ENCODE measurements at regions of chr13 and their contacts with region 1.

Region 1: GRCh38 chr13:110306960-110307746 is at the starts of genes COL4A1 and COL4A2:
- DNase-seq: peak; percentile 87 to 90 (median 88)
- ATAC-seq: peak; percentile 39 to 89 (median 76)
- H3K4me3 ChIP-seq: peak within 1 kb of the TSS; percentile 67 to 99 (median 87)
- H3K27ac ChIP-seq: peak within 1 kb of the TSS; percentile 92 to 99 (median 97)
- H3K4me1 ChIP-seq: peaks cover 17 to 75% (median 64%) of the 10 kb centered on the region in 12 donors
- H3K27me3 ChIP-seq: peaks cover 0 to 41% (median 0%) of the 10 kb centered on the region in 9 donors
- CTCF ChIP-seq: peak in 2 of 12 donors; percentile 8 to 12
- POLR2A ChIP-seq: peak; percentile 77 to 98
- total RNA-seq, gene COL4A1: 91.9 to 428 (median 184) TPM
- total RNA-seq, gene COL4A2: 94.0 to 377 (median 166) TPM

Region 2: DNA sequence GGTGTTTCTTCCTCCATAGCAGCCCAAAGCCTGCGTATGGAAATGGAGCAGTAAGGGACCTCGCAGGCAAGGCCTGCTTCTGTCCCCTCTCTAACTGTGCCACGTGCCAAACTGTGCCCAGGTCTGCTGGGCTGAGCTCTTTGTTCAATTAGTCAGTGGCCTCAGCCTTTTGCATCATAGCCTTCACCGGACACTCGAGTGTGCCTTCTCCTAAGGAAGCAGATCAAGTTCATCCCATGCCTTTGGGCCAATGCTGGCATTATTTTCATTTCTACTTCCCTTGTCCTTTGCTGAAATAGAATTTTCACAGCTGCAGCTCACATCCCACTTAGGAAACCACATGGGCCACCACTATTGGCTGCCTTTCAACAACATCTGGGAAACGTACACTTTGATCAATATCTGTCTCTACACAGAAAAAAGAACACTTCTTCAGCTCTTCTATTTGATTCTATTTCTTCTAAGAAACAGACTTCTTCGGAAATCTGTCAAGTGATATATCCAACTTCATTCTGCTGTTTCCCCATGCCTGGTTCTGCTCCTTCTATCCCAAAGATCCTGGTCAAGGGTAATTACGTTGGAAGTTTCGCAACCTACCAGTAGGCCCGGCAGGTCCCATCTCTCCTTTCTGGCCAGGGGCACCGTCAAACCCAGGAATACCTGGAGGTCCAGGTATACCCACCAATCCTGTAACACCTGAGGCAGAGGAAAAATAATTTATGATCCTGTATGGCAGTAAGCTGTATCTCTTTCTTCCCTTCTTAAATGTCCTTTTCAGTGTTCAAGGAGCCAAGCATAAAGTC is 144.1 kb before region 1 on chr13:
- intact Hi-C with region 1: no loop called
- DNase-seq: no peak
- ATAC-seq: peak in 1 of 4 donors; percentile 18
- H3K4me3 ChIP-seq: no peak overlapping the region
- H3K27ac ChIP-seq: peak overlapping the region in 2 of 12 donors; percentile 25 to 70
- H3K4me1 ChIP-seq: peaks cover 0 to 39% (median 5%) of the 10 kb centered on the region in 12 donors
- H3K27me3 ChIP-seq: no peaks in the 10 kb centered on the region
- CTCF ChIP-seq: no peak
- POLR2A ChIP-seq: no peak

Region 3: DNA sequence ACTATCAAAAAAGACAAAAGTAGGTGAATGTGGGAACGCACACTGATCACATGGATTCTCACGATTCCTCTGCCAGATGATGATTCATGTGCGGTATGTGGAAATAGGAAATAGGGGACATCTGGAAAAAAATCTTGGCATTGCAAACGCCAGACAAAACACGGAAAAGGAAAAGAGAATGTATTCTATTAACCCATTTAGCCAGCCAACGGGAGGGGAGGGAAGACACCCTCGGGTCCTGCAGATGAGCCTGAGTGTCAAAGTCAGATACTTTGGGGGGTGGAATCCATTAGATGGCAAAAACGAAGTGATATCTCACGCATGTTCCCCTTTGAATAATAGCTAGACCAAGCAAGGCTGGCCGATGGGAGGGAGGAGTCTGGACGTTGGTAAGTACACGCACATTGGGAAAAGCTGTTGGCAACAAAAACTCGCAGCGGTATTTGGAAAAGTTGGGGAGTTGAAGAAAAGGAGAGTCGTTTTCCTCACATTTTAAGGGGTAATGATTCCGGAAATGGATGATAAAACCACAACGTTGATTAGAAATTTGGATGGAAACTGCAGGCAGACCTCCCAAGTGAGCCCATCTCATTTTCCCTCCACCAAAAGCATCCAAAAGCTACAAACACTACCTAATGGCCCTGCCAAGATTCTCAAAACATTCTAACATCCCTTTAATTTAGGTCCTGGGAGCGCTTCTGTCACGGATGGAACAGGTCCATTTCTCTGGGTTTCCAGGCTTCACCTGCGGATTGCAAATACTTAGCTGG is 73.8 kb before region 1 on chr13:
- intact Hi-C with region 1: loop called in 9 of 10 experiments (anchors 5 kb)
- DNase-seq: peak in 3 of 5 donors; percentile 61 to 68 (median 66)
- ATAC-seq: peak; percentile 16 to 59 (median 47)
- H3K4me3 ChIP-seq: peak overlapping the region in 9 of 12 donors; percentile 6 to 41 (median 19)
- H3K27ac ChIP-seq: peak overlapping the region; percentile 59 to 88 (median 78)
- H3K4me1 ChIP-seq: peaks cover 17 to 86% (median 76%) of the 10 kb centered on the region in 12 donors
- H3K27me3 ChIP-seq: no peaks in the 10 kb centered on the region
- CTCF ChIP-seq: no peak
- POLR2A ChIP-seq: no peak

Region 4: GRCh38 chr13:110244071-110244830 is 62.9 kb before region 1 on chr13:
- intact Hi-C with region 1: loop called in 4 of 10 experiments (anchors 5 to 10 kb)
- DNase-seq: no peak
- ATAC-seq: peak in 2 of 4 donors; percentile 23 to 33
- H3K4me3 ChIP-seq: no peak overlapping the region
- H3K27ac ChIP-seq: peak overlapping the region; percentile 30 to 84 (median 68)
- H3K4me1 ChIP-seq: peaks cover 10 to 99% (median 81%) of the 10 kb centered on the region in 12 donors
- H3K27me3 ChIP-seq: no peaks in the 10 kb centered on the region
- CTCF ChIP-seq: no peak
- POLR2A ChIP-seq: no peak

Region 5: DNA sequence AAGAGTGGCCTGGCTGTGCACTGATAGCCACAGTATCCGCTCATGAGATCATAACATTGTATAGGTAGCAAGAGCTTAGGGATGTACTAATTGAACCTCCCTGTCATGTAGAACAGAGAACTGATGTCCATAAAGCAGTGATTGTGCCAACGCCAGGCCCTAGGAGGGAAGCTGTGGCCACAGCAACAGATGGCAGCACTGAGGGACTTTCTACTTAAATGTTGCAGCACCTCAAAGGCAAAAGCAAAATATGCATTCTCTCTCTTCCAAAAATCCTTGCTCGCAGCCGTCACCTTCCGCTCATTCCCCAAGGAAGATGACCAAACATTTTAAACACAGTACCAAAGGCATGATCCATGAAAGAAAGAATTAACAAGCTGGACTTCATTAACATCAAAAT is 32.5 kb before region 1 on chr13:
- intact Hi-C with region 1: loop called in 5 of 10 experiments (anchors 5 kb)
- DNase-seq: peak in 1 of 5 donors; percentile 40
- ATAC-seq: peak in 3 of 4 donors; percentile 35 to 52 (median 43)
- H3K4me3 ChIP-seq: no peak overlapping the region
- H3K27ac ChIP-seq: peak overlapping the region in 3 of 12 donors; percentile 18 to 71 (median 47)
- H3K4me1 ChIP-seq: peaks cover 6 to 90% (median 65%) of the 10 kb centered on the region in 12 donors
- H3K27me3 ChIP-seq: no peaks in the 10 kb centered on the region
- CTCF ChIP-seq: peak in 11 of 12 donors; percentile 18 to 58 (median 41)
- POLR2A ChIP-seq: no peak

Region 6: GRCh38 chr13:110340812-110341444 is 33.8 kb after region 1 on chr13:
- intact Hi-C with region 1: loop called in 2 of 10 experiments (anchors 5 kb)
- DNase-seq: peak; percentile 82 to 93 (median 86)
- ATAC-seq: peak; percentile 57 to 78 (median 71)
- H3K4me3 ChIP-seq: peak overlapping the region in 9 of 12 donors; percentile 1 to 32 (median 16)
- H3K27ac ChIP-seq: peak overlapping the region; percentile 74 to 96 (median 90)
- H3K4me1 ChIP-seq: peaks cover 29 to 81% (median 70%) of the 10 kb centered on the region in 12 donors
- H3K27me3 ChIP-seq: no peaks in the 10 kb centered on the region
- CTCF ChIP-seq: peak in 2 of 12 donors; percentile 7 to 19
- POLR2A ChIP-seq: no peak

Region 7: GRCh38 chr13:110347535-110348308 is 40.6 kb after region 1 on chr13:
- intact Hi-C with region 1: loop called in 2 of 10 experiments (anchors 5 kb)
- DNase-seq: peak in 3 of 5 donors; percentile 65 to 76 (median 67)
- ATAC-seq: peak; percentile 70 to 84 (median 76)
- H3K4me3 ChIP-seq: no peak overlapping the region
- H3K27ac ChIP-seq: peak overlapping the region; percentile 27 to 95 (median 57)
- H3K4me1 ChIP-seq: peaks cover 10 to 74% (median 43%) of the 10 kb centered on the region in 12 donors
- H3K27me3 ChIP-seq: no peaks in the 10 kb centered on the region
- CTCF ChIP-seq: no peak
- POLR2A ChIP-seq: no peak

Region 8: GRCh38 chr13:110371550-110372465 is 64.7 kb after region 1 on chr13:
- intact Hi-C with region 1: loop called in 1 of 10 experiments (anchors 5 kb)
- DNase-seq: no peak
- ATAC-seq: peak in 3 of 4 donors; percentile 39 to 77 (median 58)
- H3K4me3 ChIP-seq: peak overlapping the region in 3 of 12 donors; percentile 0 to 12 (median 8)
- H3K27ac ChIP-seq: peak overlapping the region in 11 of 12 donors; percentile 49 to 75 (median 60)
- H3K4me1 ChIP-seq: peaks cover 5 to 71% (median 60%) of the 10 kb centered on the region in 12 donors
- H3K27me3 ChIP-seq: no peaks in the 10 kb centered on the region
- CTCF ChIP-seq: no peak
- POLR2A ChIP-seq: no peak

Region 9: GRCh38 chr13:110387391-110388107 is 80.4 kb after region 1 on chr13:
- intact Hi-C with region 1: no loop called
- DNase-seq: peak; percentile 71 to 84 (median 80)
- ATAC-seq: peak; percentile 54 to 85 (median 72)
- H3K4me3 ChIP-seq: peak overlapping the region in 10 of 12 donors; percentile 3 to 47 (median 26)
- H3K27ac ChIP-seq: peak overlapping the region; percentile 36 to 93 (median 86)
- H3K4me1 ChIP-seq: peaks cover 0 to 57% (median 39%) of the 10 kb centered on the region in 12 donors
- H3K27me3 ChIP-seq: peaks cover 0 to 4% (median 0%) of the 10 kb centered on the region in 9 donors
- CTCF ChIP-seq: peak in 1 of 12 donors; percentile 7
- POLR2A ChIP-seq: no peak

Measured in heart left ventricle (tissue), 16 donors.